GM12878 (cell line): ENCODE measurements at regions of chr17 and their contacts with region 1.

Region 1: DNA sequence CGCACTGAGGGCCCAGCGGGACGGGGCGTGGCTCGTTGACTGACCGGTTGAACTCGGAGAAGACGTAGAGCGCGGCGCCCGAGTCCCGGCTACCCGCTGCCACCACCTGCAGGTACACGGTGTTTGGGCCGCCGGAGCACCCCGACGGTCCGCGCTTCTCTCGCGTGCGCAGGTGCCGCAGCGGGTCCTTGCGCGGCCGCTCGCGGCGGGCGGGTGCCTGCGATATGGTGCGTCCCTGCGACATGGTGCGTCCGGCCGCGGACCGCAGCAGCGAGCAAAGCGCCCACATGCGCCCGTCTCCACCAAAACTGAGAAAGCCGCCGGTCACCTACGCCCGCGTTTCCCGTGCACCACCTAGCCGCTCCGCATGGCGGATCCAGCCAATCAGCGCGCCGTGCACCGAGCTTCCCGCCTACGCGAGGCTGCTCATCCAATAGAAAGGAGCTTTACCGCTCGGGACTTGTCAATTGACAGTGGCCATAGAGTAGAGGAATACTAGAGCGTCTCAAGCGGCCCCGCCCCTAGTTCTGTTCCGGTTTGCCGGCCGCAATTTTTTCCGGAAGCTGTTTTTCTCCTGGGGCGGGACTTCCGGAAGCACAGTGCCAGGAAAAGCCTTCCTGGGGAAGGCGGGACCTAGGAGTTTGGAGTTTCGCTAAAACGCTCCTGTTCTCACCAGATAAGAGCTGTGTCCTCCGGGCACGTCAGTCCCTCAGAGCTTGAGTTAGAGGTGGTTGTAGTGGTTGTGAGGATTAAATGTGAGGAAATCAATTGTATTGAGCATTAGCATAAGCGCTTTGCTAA is at the start of gene ELAC2:
- DNase-seq: peak; percentile 88
- ATAC-seq: peak; percentile 98
- H3K4me3 ChIP-seq: peak within 1 kb of the TSS; percentile 80
- H3K27ac ChIP-seq: peak within 1 kb of the TSS; percentile 78
- H3K4me1 ChIP-seq: no peaks in the 10 kb centered on the region
- H3K27me3 ChIP-seq: no peaks in the 10 kb centered on the region
- CTCF ChIP-seq: 0 out of 6 replicates have a peak, but pooled peaks of 1 of the 3 experiments have one; percentile 16
- EP300 ChIP-seq: no peak
- POLR2A ChIP-seq: peak; percentile 95
- RAD21 ChIP-seq: no peak
- polyA plus RNA-seq, gene ELAC2: 5.1 to 11.0 TPM

Region 2: DNA sequence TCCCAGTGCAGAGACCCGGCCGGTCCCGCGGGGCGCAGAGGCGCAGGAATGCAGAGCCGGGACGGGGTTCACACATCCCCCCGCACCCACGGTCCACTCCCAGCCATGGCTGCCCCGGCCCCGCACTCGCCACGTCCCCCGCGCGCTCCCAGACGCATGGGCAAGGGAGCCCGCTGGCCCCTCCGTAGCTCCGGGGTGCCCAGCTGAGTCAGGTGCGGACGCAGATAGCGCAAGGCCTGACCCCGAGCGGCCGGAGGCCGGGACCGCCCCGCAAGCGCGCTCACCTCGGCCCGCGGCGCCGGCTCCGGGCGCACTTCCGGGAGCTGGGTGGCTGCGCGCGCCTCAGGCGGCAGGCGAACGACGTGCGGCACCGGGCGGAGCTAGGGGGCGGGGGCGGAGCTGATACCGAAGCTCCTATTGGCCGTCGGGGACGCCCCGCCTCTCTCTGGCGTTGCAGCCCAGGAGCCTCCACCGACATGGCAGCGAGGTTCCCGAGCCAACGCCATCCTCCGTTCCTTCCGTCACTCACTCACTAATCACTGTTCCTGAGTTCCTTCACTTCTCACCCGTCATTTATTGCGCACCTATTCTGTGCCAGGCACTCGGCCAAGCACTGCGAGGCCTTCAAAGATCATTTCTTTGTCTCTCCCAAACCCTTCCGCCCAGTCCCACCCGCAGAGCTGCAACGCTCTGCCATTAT is 1020.6 kb before region 1 on chr17 and contains the start of gene ZNF18:
- CTCF ChIA-PET with region 1: no interaction called
- POLR2A ChIA-PET with region 1: interaction called, 3 read pairs
- RAD21 ChIA-PET with region 1: interaction called, 4 read pairs
- SMC1A ChIA-PET with region 1: no interaction called
- in situ Hi-C with region 1: loop called (anchors 10 kb)
- intact Hi-C with region 1: no loop called
- DNase-seq: peak; percentile 68
- ATAC-seq: peak; percentile 98
- H3K4me3 ChIP-seq: peak within 1 kb of the TSS; percentile 87
- H3K27ac ChIP-seq: peak within 1 kb of the TSS; percentile 23
- H3K4me1 ChIP-seq: peaks cover 3% of the 10 kb centered on the region; the same call in 1 of the 2 replicates
- H3K27me3 ChIP-seq: no peaks in the 10 kb centered on the region
- CTCF ChIP-seq: no peak
- EP300 ChIP-seq: no peak
- POLR2A ChIP-seq: peak; percentile 96
- RAD21 ChIP-seq: no peak
- polyA plus RNA-seq, gene ZNF18: 4.6 to 6.0 TPM

Region 3: GRCh38 chr17:12020642-12021622 is 996.9 kb before region 1 on chr17 and contains the start of gene MAP2K4:
- CTCF ChIA-PET with region 1: no interaction called
- POLR2A ChIA-PET with region 1: no interaction called
- RAD21 ChIA-PET with region 1: no interaction called
- SMC1A ChIA-PET with region 1: interaction called, 3 read pairs
- in situ Hi-C with region 1: no loop called
- intact Hi-C with region 1: loop called (anchors 5 kb)
- DNase-seq: peak; percentile 40
- ATAC-seq: peak; percentile 97
- H3K4me3 ChIP-seq: peak within 1 kb of the TSS; percentile 61
- H3K27ac ChIP-seq: peak within 1 kb of the TSS; percentile 70
- H3K4me1 ChIP-seq: peaks cover 4% of the 10 kb centered on the region; the same call in 1 of the 2 replicates
- H3K27me3 ChIP-seq: no peaks in the 10 kb centered on the region
- CTCF ChIP-seq: no peak
- EP300 ChIP-seq: no peak
- POLR2A ChIP-seq: peak; percentile 91
- RAD21 ChIP-seq: no peak
- polyA plus RNA-seq, gene MAP2K4: 5.4 to 10.0 TPM

Region 4: DNA sequence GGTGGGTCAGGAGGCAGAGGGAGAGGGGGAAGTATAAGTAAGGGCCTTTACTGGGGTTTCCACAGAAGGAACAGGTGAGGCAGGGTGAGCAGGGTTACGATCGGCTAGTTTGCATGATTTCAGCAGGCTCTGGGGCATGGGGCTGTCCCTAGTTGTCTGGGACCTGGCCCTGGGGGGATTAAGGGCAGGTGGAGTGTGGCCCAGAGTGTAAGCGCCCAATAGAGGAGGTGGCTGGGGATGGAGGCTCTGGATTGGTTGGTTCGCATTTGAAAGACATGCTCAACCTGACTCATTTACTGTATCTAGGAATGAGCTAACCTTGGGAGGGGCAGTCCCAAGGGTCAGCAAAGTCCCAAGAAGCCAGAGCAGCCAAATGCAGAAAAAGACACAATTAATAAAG is 766.9 kb before region 1 on chr17:
- CTCF ChIA-PET with region 1: interaction called, 3 read pairs
- POLR2A ChIA-PET with region 1: no interaction called
- RAD21 ChIA-PET with region 1: no interaction called
- SMC1A ChIA-PET with region 1: no interaction called
- in situ Hi-C with region 1: loop called (anchors 5 kb)
- intact Hi-C with region 1: no loop called
- DNase-seq: no peak
- ATAC-seq: peak; percentile 26; the same call in 2 of the 3 replicates
- H3K4me3 ChIP-seq: no peak overlapping the region
- H3K27ac ChIP-seq: no peak overlapping the region
- H3K4me1 ChIP-seq: no peaks in the 10 kb centered on the region; the same call in 1 of the 2 replicates
- H3K27me3 ChIP-seq: no peaks in the 10 kb centered on the region
- CTCF ChIP-seq: no peak
- EP300 ChIP-seq: no peak
- POLR2A ChIP-seq: no peak
- RAD21 ChIP-seq: no peak

Region 5: DNA sequence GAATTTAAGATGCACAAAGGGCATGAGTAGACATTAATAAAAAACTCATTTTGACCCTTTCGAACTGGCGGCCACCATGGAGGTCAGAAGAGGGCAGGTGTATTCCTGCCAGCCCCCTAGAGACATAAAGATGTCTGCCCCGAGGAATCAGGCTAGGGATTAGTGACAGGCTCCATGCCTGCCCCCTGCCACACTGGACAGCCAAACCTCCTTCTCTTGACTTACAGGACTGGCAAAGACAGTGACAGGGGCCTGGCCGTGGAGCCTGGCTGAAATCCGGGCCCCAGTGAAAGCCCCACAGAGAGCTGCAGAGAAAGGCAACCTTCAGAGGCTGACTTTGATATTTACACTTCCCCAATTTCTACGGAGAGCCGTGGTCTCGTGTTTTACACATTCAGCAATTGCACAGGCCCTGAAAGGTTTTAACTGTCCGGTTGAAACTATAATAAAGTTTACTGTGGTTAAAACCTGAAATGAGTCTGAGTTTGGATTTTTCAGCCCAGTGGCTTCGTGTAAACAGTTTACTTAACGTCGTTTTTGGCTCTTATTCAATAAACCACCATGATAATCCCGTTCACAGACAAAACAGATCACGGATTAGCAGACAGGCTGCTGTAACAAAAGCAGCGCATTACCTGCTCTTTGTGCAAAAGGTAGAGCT is 596.1 kb before region 1 on chr17:
- CTCF ChIA-PET with region 1: no interaction called
- POLR2A ChIA-PET with region 1: no interaction called
- RAD21 ChIA-PET with region 1: no interaction called
- SMC1A ChIA-PET with region 1: no interaction called
- in situ Hi-C with region 1: loop called (anchors 10 kb)
- intact Hi-C with region 1: no loop called
- DNase-seq: no peak
- ATAC-seq: peak; percentile 93
- H3K4me3 ChIP-seq: no peak overlapping the region
- H3K27ac ChIP-seq: peak overlapping the region; percentile 32; the same call in 1 of the 2 replicates
- H3K4me1 ChIP-seq: peaks cover 13% of the 10 kb centered on the region
- H3K27me3 ChIP-seq: no peaks in the 10 kb centered on the region
- CTCF ChIP-seq: no peak
- EP300 ChIP-seq: peak; percentile 7 to 25; a peak in 1 of 4 replicates
- POLR2A ChIP-seq: no peak
- RAD21 ChIP-seq: no peak

Region 6: GRCh38 chr17:12431188-12431587 is 586.7 kb before region 1 on chr17:
- CTCF ChIA-PET with region 1: no interaction called
- POLR2A ChIA-PET with region 1: no interaction called
- RAD21 ChIA-PET with region 1: no interaction called
- SMC1A ChIA-PET with region 1: no interaction called
- in situ Hi-C with region 1: loop called (anchors 10 kb)
- intact Hi-C with region 1: loop called (anchors 10 kb)
- DNase-seq: peak; percentile 85
- ATAC-seq: peak; percentile 89
- H3K4me3 ChIP-seq: 0 out of 2 replicates have a peak overlapping the region, but pooled peaks have one; percentile 6
- H3K27ac ChIP-seq: peak overlapping the region; percentile 98
- H3K4me1 ChIP-seq: peaks cover 44% of the 10 kb centered on the region
- H3K27me3 ChIP-seq: no peaks in the 10 kb centered on the region
- CTCF ChIP-seq: no peak
- EP300 ChIP-seq: peak; percentile 54 to 96; a peak in 3 of 4 replicates
- POLR2A ChIP-seq: peak; percentile 52
- RAD21 ChIP-seq: no peak

Region 7: GRCh38 chr17:13002766-13003451 is 14.9 kb before region 1 on chr17:
- CTCF ChIA-PET with region 1: interaction called, 26 read pairs
- POLR2A ChIA-PET with region 1: no interaction called
- RAD21 ChIA-PET with region 1: interaction called, 8 read pairs
- SMC1A ChIA-PET with region 1: interaction called, 11 read pairs
- in situ Hi-C with region 1: no loop called
- intact Hi-C with region 1: no loop called
- DNase-seq: no peak
- ATAC-seq: peak; percentile 90
- H3K4me3 ChIP-seq: no peak overlapping the region
- H3K27ac ChIP-seq: no peak overlapping the region
- H3K4me1 ChIP-seq: no peaks in the 10 kb centered on the region
- H3K27me3 ChIP-seq: no peaks in the 10 kb centered on the region
- CTCF ChIP-seq: peak; percentile 72 to 84 (median 80)
- EP300 ChIP-seq: no peak
- POLR2A ChIP-seq: no peak
- RAD21 ChIP-seq: peak; percentile 90